ENCODE measurements at regions of chr2 and their contacts with region 1.

Region 1: DNA sequence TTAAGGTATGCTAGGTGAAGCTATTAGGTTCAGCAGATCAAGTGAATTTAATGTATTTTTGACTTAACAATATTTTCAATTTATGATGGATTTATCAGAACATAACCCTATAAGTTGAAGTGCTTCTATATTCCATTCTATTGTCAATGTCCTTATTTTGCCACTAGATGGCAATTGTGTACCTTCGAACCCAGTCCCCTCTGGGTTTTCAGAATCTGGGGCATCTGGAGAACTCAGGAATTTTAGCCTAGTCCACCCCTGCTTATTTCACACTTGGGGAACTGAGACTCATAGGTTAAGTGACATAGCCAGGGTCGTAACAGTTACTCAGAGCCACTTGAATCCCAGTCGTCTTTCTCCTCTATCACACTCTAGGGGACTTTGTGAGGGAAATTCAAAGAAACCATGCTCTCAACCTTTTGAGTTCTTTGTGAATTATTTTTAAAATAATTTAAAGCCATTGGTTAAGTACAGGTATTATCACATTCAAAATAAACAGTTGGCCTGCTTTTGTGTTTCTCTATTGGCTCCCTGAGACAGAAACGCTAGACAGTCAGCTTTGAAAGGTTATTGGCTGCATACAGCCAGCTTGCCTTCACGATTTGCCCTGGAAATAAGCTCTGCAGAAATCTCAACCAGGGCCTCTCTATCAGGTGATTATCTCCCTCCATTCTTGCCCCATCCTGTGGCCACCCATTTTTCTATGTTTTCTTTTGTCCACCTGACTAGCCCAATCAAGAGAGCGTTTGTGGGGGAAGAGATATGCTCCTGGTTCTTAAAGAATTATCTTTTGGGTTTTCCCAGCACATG is 145.0 kb downstream of the TTC27 start:
- DNase-seq: peak; percentile 41 to 58
- H3K4me3 ChIP-seq: no peak overlapping the region
- H3K4me3 Mint-ChIP-seq: no peak overlapping the region
- H3K27ac Mint-ChIP-seq: no peak overlapping the region
- H3K4me1 ChIP-seq: no peaks in the 10 kb centered on the region
- H3K4me1 Mint-ChIP-seq: peaks cover 5% of the 10 kb centered on the region
- H3K27me3 ChIP-seq: no peaks in the 10 kb centered on the region
- H3K27me3 Mint-ChIP-seq: no peaks in the 10 kb centered on the region
- CTCF ChIP-seq: peak; percentile 70 to 84

Region 2: GRCh38 chr2:32553829-32554432 is 218.9 kb before region 1 on chr2:
- CTCF ChIA-PET with region 1: no interaction called
- POLR2A ChIA-PET with region 1: no interaction called
- intact Hi-C with region 1: loop called (anchors 5 kb)
- DNase-seq: peak in 1 of 2 experiments; percentile 35
- H3K4me3 ChIP-seq: no peak overlapping the region
- H3K4me3 Mint-ChIP-seq: no peak overlapping the region
- H3K27ac Mint-ChIP-seq: no peak overlapping the region
- H3K4me1 ChIP-seq: no peaks in the 10 kb centered on the region
- H3K4me1 Mint-ChIP-seq: no peaks in the 10 kb centered on the region
- H3K27me3 ChIP-seq: no peaks in the 10 kb centered on the region
- H3K27me3 Mint-ChIP-seq: no peaks in the 10 kb centered on the region
- CTCF ChIP-seq: peak; percentile 62 to 88

Region 3: DNA sequence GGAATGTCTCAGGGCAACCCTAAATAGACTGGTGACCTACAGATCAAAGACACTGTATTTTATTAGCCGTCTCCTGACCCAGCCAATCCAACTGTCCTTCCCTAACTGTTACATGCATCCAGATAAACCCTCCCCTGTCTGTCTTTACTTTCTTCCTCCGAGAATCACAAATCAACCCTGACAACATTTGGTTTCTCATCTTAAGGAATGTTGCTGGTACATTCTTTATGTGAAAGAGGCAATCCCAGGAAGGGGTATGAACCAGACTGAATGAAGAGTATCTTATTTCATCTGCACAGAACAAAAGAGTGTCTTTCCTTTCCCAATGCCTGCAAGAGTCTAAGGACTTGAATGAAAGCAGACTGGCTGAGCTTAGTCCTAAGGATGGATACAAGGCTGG is 60.0 kb after region 1 on chr2:
- CTCF ChIA-PET with region 1: no interaction called
- POLR2A ChIA-PET with region 1: no interaction called
- intact Hi-C with region 1: loop called (anchors 2 kb)
- DNase-seq: peak; percentile 68 to 70
- H3K4me3 ChIP-seq: no peak overlapping the region
- H3K4me3 Mint-ChIP-seq: peak overlapping the region; percentile 56
- H3K27ac Mint-ChIP-seq: peak overlapping the region; percentile 84
- H3K4me1 ChIP-seq: peaks cover 45% of the 10 kb centered on the region
- H3K4me1 Mint-ChIP-seq: peaks cover 51% of the 10 kb centered on the region
- H3K27me3 ChIP-seq: no peaks in the 10 kb centered on the region
- H3K27me3 Mint-ChIP-seq: no peaks in the 10 kb centered on the region
- CTCF ChIP-seq: no peak

Region 4: DNA sequence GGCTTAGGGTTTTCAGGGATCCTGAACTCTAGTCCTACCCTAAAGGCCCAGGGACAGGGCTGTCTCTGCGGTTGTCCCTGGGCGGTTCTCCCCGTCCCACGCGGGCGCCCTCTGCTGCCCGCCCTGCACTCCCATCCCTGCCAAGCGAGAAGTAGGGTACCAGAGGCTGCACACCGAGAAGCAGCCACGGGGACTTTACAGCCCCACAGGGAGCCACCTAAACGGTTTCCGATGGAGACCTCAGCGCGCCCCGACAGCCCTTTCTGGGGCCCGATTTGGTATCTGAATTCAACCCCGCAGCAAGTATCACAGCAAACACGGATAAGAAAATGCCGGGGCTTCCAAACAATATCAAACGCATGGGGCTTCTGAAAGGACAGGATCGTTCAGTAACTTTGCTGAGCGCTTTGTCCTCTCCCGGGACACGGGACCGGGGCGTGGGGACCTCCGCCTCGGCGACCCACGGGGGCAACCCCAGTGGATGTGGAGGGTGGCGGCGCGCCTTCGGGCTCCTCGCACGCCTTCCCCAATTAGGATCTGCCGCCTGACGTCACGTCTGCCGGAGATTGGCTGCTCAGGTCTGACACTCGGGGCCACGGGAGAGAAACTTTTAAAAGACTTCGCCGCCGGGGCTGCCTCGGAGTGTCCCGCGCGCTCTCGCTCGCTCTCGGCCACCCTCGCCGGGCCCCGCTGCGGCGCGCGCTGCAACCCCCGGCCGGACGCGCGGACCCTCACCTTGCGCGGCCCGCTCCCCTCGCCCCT is 173.7 kb after region 1 on chr2 and contains the start of gene LTBP1:
- CTCF ChIA-PET with region 1: no interaction called
- POLR2A ChIA-PET with region 1: no interaction called
- intact Hi-C with region 1: loop called (anchors 1 kb)
- DNase-seq: peak; percentile 79 to 84
- H3K4me3 ChIP-seq: peak within 1 kb of the TSS; percentile 71
- H3K4me3 Mint-ChIP-seq: peak within 1 kb of the TSS; percentile 79
- H3K27ac Mint-ChIP-seq: peak within 1 kb of the TSS; percentile 69
- H3K4me1 ChIP-seq: peaks cover 8% of the 10 kb centered on the region; the same call in 1 of the 2 replicates
- H3K4me1 Mint-ChIP-seq: peaks cover 7% of the 10 kb centered on the region
- H3K27me3 ChIP-seq: no peaks in the 10 kb centered on the region
- H3K27me3 Mint-ChIP-seq: no peaks in the 10 kb centered on the region
- CTCF ChIP-seq: peak; percentile 83 to 94
- total RNA-seq, gene LTBP1: 64.2 and 64.9 TPM in 2 replicates

Region 5: DNA sequence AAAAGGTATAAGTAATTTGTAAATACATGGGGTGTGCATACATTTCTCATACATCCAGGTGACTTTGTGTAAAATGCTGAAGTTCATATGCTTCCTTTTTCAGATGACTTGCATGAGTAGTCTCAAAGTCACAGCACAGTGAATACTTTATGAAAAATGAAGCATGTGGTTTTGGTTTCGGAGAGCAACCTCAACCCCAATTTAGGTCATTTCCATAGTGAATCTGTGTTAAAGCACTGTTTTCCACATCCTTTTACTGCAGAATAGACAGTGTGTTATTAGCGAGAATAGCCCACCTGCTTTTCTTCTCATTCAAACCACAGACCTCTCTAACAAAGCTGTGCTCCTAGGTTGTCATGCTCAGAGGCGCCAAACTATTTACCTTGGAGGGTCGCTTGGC is 499.2 kb after region 1 on chr2:
- CTCF ChIA-PET with region 1: no interaction called
- POLR2A ChIA-PET with region 1: no interaction called
- intact Hi-C with region 1: loop called (anchors 1 kb)
- DNase-seq: no peak
- H3K4me3 ChIP-seq: no peak overlapping the region
- H3K4me3 Mint-ChIP-seq: no peak overlapping the region
- H3K27ac Mint-ChIP-seq: no peak overlapping the region
- H3K4me1 ChIP-seq: 0 out of 2 replicates have a peak, but pooled peaks cover 4% of the 10 kb centered on the region
- H3K4me1 Mint-ChIP-seq: peaks cover 17% of the 10 kb centered on the region
- H3K27me3 ChIP-seq: no peaks in the 10 kb centered on the region
- H3K27me3 Mint-ChIP-seq: no peaks in the 10 kb centered on the region
- CTCF ChIP-seq: no peak

Region 6: GRCh38 chr2:33441235-33441810 is 668.5 kb after region 1 on chr2:
- CTCF ChIA-PET with region 1: no interaction called
- POLR2A ChIA-PET with region 1: no interaction called
- intact Hi-C with region 1: loop called (anchors 1 kb)
- DNase-seq: peak; percentile 55 to 64
- H3K4me3 ChIP-seq: no peak overlapping the region
- H3K4me3 Mint-ChIP-seq: no peak overlapping the region
- H3K27ac Mint-ChIP-seq: no peak overlapping the region
- H3K4me1 ChIP-seq: no peaks in the 10 kb centered on the region
- H3K4me1 Mint-ChIP-seq: no peaks in the 10 kb centered on the region
- H3K27me3 ChIP-seq: no peaks in the 10 kb centered on the region
- H3K27me3 Mint-ChIP-seq: peaks cover under 1% of the 10 kb centered on the region
- CTCF ChIP-seq: peak; percentile 55 to 74